ENCODE measurements at regions of chr5 and their contacts with region 1.

Region 1: GRCh38 chr5:112995764-112996618 is 19.4 kb downstream of the DCP2 start:
- DNase-seq: peak; percentile 76 to 82
- ATAC-seq: peak; percentile 87
- H3K4me3 ChIP-seq: no peak overlapping the region
- H3K27ac ChIP-seq: no peak overlapping the region
- H3K4me1 ChIP-seq: no peaks in the 10 kb centered on the region
- H3K27me3 ChIP-seq: no peaks in the 10 kb centered on the region

Region 2: GRCh38 chr5:113330533-113331208 is 334.7 kb after region 1 on chr5:
- intact Hi-C with region 1: loop called in 1 of 2 experiments (anchors 10 kb)
- DNase-seq: peak in 1 of 2 donors; percentile 68
- ATAC-seq: peak; percentile 57
- H3K4me3 ChIP-seq: no peak overlapping the region
- H3K27ac ChIP-seq: no peak overlapping the region
- H3K4me1 ChIP-seq: no peaks in the 10 kb centered on the region
- H3K27me3 ChIP-seq: no peaks in the 10 kb centered on the region